ENCODE measurements at regions of chr9 and their contacts with region 1.

Region 1: GRCh38 chr9:37415011-37415719 is 7.3 kb upstream of the GRHPR start:
- DNase-seq: peak; percentile 80
- ATAC-seq: peak; percentile 76
- H3K4me3 ChIP-seq: peak overlapping the region in 1 of 2 experiments; percentile 29; a peak in 2 of 4 replicates
- H3K27ac ChIP-seq: peak overlapping the region; percentile 84
- H3K4me1 ChIP-seq: peaks cover 43% of the 10 kb centered on the region
- H3K27me3 ChIP-seq: no peaks in the 10 kb centered on the region
- CTCF ChIP-seq: no peak

Region 2: DNA sequence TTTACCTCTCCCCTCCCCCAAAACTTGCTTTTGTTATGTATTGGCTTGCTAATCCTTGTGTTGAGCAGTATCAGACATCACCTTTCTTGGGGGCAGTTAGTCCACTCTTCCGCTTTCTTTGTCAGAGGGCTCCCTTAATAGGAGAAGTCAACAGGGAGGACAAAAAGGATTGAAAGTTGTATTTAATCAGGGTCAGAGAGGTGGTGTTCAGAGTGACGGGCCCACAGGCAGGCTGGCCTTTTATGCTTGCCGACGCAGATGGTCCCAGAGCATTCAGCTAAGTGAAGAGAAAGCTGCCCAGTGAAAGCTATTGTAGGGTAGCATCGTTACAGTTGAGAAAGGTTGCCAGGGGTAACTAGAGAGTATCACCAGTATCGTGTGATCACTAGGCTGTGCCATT is 163.7 kb before region 1 on chr9:
- CTCF ChIA-PET with region 1: no interaction called
- POLR2A ChIA-PET with region 1: no interaction called
- in situ Hi-C with region 1: no loop called
- intact Hi-C with region 1: no loop called
- DNase-seq: no peak
- ATAC-seq: no peak
- H3K4me3 ChIP-seq: no peak overlapping the region
- H3K27ac ChIP-seq: no peak overlapping the region
- H3K4me1 ChIP-seq: peaks cover 4% of the 10 kb centered on the region; the same call in 1 of the 2 replicates
- H3K27me3 ChIP-seq: no peaks in the 10 kb centered on the region
- CTCF ChIP-seq: no peak

Region 3: GRCh38 chr9:37425301-37425752 is 10.2 kb after region 1 on chr9:
- CTCF ChIA-PET with region 1: interaction called, 13 read pairs
- POLR2A ChIA-PET with region 1: no interaction called
- in situ Hi-C with region 1: no loop called
- intact Hi-C with region 1: no loop called
- DNase-seq: no peak
- ATAC-seq: no peak
- H3K4me3 ChIP-seq: no peak overlapping the region
- H3K27ac ChIP-seq: peak overlapping the region; percentile 7; the same call in 1 of the 2 replicates
- H3K4me1 ChIP-seq: peaks cover 27% of the 10 kb centered on the region
- H3K27me3 ChIP-seq: no peaks in the 10 kb centered on the region
- CTCF ChIP-seq: no peak

Region 4: DNA sequence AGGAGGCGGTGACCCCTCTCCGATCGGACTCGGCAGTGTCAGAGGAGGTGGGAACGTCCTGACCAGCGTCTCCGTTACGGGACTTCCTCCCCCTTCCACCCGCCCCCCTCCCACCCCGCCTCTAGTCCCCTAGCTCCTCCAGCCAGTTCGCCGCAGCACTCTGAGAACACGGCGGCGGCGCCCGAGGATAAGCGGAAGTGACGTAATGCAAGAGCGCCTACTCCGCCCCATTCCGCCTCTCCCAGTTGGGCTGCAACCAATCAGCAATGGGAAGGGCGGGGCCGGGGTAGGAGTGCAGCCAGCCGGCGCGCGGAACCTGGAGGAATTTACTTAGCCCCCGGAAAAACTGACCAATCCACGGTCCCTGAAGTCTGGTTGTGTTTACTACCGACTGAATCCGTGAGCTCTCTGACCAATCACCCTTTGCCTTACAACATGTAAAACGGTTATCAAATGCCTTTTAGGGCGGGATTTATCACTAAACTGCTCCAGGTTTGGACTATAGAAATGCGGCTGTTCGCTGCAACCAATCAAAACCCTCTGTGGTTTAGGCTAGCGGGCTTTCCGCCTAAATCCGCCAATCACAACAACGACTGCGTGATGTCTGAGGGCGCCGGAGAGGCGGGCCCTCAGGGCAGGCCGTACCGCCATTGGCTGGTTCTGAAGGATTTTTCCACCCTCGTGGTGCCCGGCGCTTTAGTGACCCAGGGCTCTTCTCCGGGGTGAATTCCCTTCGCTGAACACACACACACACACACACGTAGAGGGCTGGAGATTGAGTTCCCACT is 50.3 kb after region 1 on chr9 and contains the start of gene ZBTB5:
- CTCF ChIA-PET with region 1: interaction called, 3 read pairs
- POLR2A ChIA-PET with region 1: interaction called, 10 read pairs
- in situ Hi-C with region 1: no loop called
- intact Hi-C with region 1: no loop called
- DNase-seq: peak; percentile 100
- ATAC-seq: peak; percentile 83
- H3K4me3 ChIP-seq: peak within 1 kb of the TSS; percentile 81 to 84
- H3K27ac ChIP-seq: peak within 1 kb of the TSS; percentile 100
- H3K4me1 ChIP-seq: peaks cover 18% of the 10 kb centered on the region
- H3K27me3 ChIP-seq: no peaks in the 10 kb centered on the region
- CTCF ChIP-seq: no peak
- total RNA-seq, gene ZBTB5: 30.6 TPM

Region 5: GRCh38 chr9:37503736-37504135 is 88.6 kb after region 1 on chr9:
- CTCF ChIA-PET with region 1: no interaction called
- POLR2A ChIA-PET with region 1: no interaction called
- in situ Hi-C with region 1: no loop called
- intact Hi-C with region 1: no loop called
- DNase-seq: no peak
- ATAC-seq: no peak
- H3K4me3 ChIP-seq: no peak overlapping the region
- H3K27ac ChIP-seq: no peak overlapping the region
- H3K4me1 ChIP-seq: no peaks in the 10 kb centered on the region
- H3K27me3 ChIP-seq: no peaks in the 10 kb centered on the region
- CTCF ChIP-seq: no peak

Measured in Panc1 (cell line).